Tibial artery (tissue), 4 donors: ENCODE measurements at regions of chr11 and their contacts with region 1.

Region 1: DNA sequence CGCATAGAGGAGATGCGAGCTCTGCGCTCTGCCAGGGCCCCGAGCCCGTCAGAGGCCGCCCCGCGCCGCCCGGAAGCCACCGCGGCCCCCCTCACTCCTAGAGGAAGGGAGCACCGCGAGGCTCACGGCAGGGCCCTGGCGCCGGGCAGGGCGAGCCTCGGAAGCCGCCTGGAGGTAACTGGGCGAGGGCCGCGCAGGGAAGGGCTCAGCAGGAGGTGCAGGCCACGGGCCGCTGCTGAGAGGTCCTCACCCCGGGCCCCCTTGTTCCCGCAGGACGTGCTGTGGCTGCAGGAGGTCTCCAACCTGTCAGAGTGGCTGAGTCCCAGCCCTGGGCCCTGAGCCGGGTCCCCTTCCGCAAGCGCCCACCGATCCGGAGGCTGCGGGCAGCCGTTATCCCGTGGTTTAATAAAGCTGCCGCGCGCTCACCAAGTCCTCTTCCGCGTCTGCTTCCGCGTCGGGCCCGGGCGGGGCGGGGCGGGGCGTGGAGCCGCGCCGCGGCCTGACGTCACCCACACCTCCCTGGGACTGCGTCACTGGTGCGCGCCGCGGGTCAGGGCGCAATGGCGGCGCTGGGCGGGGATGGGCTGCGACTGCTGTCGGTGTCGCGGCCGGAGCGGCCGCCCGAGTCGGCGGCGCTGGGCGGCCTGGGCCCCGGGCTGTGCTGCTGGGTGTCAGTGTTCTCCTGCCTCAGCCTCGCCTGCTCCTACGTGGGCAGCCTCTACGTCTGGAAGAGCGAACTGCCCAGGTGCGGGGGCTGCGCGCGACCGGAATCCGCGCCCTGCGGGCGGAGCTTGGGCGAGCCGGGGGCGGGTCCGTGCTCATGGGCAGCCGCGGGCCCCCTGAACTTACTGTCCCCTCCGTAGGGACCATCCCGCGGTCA is at the start of gene RCE1:
- DNase-seq: peak; percentile 84 to 94
- H3K4me3 ChIP-seq: peak within 1 kb of the TSS; percentile 81 to 92
- H3K27ac ChIP-seq: peak within 1 kb of the TSS; percentile 91 to 98
- H3K4me1 ChIP-seq: peaks cover 8 to 37% (median 29%) of the 10 kb centered on the region in 4 donors
- H3K27me3 ChIP-seq: no peaks in the 10 kb centered on the region
- CTCF ChIP-seq: no peak

Region 2: GRCh38 chr11:66674964-66675602 is 168.1 kb before region 1 on chr11:
- intact Hi-C with region 1: no loop called
- DNase-seq: no peak
- H3K4me3 ChIP-seq: no peak overlapping the region
- H3K27ac ChIP-seq: no peak overlapping the region
- H3K4me1 ChIP-seq: peaks cover 0 to 48% (median 24%) of the 10 kb centered on the region in 4 donors
- H3K27me3 ChIP-seq: no peaks in the 10 kb centered on the region
- CTCF ChIP-seq: no peak

Region 3: DNA sequence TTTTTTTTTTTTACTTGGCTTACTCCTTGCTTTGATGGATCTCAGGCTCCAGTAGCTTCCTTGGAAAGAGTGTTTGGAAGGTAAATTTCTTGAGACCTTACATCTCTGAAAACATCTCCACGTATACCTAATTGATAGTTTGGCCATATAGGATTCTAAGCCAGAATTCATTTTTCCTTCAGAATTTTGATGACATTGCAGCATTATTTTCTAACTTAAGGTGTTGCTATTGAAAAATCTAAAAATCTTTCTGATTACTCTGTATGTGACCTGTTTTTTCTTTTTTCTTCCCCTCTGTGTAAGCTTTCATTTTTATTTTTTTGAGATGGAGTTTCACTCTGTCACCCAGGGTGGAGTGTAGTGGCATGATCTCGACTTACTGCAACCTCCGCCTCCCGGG is 91.0 kb before region 1 on chr11:
- intact Hi-C with region 1: no loop called
- DNase-seq: no peak
- H3K4me3 ChIP-seq: no peak overlapping the region
- H3K27ac ChIP-seq: no peak overlapping the region
- H3K4me1 ChIP-seq: peaks cover 0 to 3% (median 0%) of the 10 kb centered on the region in 4 donors
- H3K27me3 ChIP-seq: no peaks in the 10 kb centered on the region
- CTCF ChIP-seq: no peak

Region 4: GRCh38 chr11:66915046-66915832 is 72.1 kb after region 1 on chr11:
- intact Hi-C with region 1: no loop called
- DNase-seq: no peak
- H3K4me3 ChIP-seq: no peak overlapping the region
- H3K27ac ChIP-seq: no peak overlapping the region
- H3K4me1 ChIP-seq: peaks cover 0 to 7% (median 0%) of the 10 kb centered on the region in 4 donors
- H3K27me3 ChIP-seq: no peaks in the 10 kb centered on the region
- CTCF ChIP-seq: no peak

Region 5: GRCh38 chr11:67060111-67060522 is 217.0 kb after region 1 on chr11:
- intact Hi-C with region 1: loop called (anchors 10 kb)
- DNase-seq: no peak
- H3K4me3 ChIP-seq: no peak overlapping the region
- H3K27ac ChIP-seq: no peak overlapping the region
- H3K4me1 ChIP-seq: peaks cover 0 to 32% (median 23%) of the 10 kb centered on the region in 4 donors
- H3K27me3 ChIP-seq: no peaks in the 10 kb centered on the region
- CTCF ChIP-seq: no peak